Mammary epithelial cell (primary cell): ENCODE measurements at regions of chr4 and their contacts with region 1.

Region 1: DNA sequence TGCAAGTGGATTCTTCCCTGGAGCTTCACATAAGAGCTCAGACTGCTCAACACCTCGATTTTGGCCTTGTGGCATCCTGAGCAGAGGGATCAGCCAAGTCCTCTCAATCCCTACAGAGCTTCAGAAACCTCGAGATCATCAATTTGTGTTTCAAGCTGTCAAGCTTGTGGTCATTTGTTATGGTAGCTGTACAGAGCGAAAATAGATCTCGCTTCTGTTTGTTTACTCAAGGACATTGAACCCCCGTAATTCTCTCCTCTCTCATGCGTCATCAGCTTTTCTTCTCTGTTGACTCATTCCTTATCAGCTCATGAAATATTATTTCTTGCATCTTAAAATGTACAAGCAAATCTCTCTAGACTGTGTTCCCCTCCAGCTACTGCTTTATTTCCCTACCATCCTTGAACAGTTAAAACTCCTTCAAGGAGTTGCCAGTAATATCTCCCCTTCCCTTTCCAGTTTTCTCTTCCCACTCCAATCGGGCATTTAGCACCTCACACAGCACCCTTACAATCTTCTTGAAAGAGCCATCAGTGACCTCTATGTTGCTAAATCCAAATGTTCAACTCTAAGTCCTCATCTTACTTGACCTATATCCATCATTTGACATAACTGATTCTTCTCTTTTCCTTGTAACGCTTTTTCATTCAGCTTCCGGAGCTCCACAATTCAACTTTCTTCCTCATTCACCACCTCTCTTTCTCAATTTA is 106.2 kb upstream of the FAT1 start:
- DNase-seq: no peak
- H3K4me3 ChIP-seq: no peak overlapping the region
- H3K27ac ChIP-seq: no peak overlapping the region
- H3K4me1 ChIP-seq: peaks cover 23% of the 10 kb centered on the region
- H3K27me3 ChIP-seq: no peaks in the 10 kb centered on the region
- CTCF ChIP-seq: no peak

Region 2: GRCh38 chr4:186029571-186030398 is 800.1 kb before region 1 on chr4:
- CTCF ChIA-PET with region 1: no interaction called
- dilution Hi-C with region 1: no loop called
- in situ Hi-C with region 1: no loop called
- intact Hi-C with region 1: no loop called
- DNase-seq: no peak
- H3K4me3 ChIP-seq: no peak overlapping the region
- H3K27ac ChIP-seq: no peak overlapping the region
- H3K4me1 ChIP-seq: no peaks in the 10 kb centered on the region
- H3K27me3 ChIP-seq: no peaks in the 10 kb centered on the region
- CTCF ChIP-seq: no peak

Region 3: DNA sequence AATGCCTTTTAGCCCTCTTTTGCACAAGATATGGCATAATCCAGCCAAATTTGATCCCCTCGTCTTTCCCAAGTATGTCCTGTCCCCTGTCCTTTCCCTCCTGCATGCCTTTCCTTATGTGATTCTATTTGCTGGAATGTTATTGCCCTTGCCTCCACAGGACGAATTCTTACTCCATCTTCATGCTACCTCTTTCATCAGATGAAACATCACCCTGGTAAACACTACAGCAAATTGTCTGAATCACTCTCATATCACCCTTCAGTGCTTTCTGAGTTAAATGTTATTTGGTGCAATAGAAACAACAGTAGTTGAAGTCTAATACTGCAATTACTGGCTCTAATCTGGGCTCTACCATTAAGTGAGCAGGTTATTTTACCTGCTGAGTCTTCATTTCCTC is 54.0 kb before region 1 on chr4:
- CTCF ChIA-PET with region 1: no interaction called
- dilution Hi-C with region 1: no loop called
- in situ Hi-C with region 1: no loop called
- intact Hi-C with region 1: loop called (anchors 2 kb)
- DNase-seq: no peak
- H3K4me3 ChIP-seq: no peak overlapping the region
- H3K27ac ChIP-seq: no peak overlapping the region
- H3K4me1 ChIP-seq: peaks cover 23% of the 10 kb centered on the region
- H3K27me3 ChIP-seq: no peaks in the 10 kb centered on the region
- CTCF ChIP-seq: no peak

Region 4: DNA sequence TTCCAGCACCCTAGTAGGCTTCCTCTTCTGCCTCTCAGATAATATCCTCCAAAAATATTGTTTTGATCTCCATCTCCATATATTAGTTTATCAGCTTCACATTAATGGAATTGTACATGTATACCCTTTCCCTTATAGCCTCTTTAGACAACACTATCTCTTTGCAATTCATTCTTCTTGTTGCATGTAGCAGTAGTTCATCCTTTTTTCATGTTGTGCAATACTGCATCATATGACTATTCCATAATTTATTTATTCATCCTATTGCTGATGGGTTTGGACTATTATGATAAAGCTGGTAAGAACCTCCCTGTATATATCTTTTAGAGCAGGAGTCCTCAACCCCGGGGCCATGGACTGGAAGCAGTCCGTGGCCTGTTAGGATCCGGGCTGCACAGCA is 42.0 kb after region 1 on chr4:
- CTCF ChIA-PET with region 1: no interaction called
- dilution Hi-C with region 1: no loop called
- in situ Hi-C with region 1: no loop called
- intact Hi-C with region 1: no loop called
- DNase-seq: no peak
- H3K4me3 ChIP-seq: no peak overlapping the region
- H3K27ac ChIP-seq: no peak overlapping the region
- H3K4me1 ChIP-seq: no peaks in the 10 kb centered on the region
- H3K27me3 ChIP-seq: no peaks in the 10 kb centered on the region
- CTCF ChIP-seq: no peak